CD4-positive, alpha-beta memory T cell (primary cell): ENCODE measurements at regions of chr20 and their contacts with region 1.

Region 1: DNA sequence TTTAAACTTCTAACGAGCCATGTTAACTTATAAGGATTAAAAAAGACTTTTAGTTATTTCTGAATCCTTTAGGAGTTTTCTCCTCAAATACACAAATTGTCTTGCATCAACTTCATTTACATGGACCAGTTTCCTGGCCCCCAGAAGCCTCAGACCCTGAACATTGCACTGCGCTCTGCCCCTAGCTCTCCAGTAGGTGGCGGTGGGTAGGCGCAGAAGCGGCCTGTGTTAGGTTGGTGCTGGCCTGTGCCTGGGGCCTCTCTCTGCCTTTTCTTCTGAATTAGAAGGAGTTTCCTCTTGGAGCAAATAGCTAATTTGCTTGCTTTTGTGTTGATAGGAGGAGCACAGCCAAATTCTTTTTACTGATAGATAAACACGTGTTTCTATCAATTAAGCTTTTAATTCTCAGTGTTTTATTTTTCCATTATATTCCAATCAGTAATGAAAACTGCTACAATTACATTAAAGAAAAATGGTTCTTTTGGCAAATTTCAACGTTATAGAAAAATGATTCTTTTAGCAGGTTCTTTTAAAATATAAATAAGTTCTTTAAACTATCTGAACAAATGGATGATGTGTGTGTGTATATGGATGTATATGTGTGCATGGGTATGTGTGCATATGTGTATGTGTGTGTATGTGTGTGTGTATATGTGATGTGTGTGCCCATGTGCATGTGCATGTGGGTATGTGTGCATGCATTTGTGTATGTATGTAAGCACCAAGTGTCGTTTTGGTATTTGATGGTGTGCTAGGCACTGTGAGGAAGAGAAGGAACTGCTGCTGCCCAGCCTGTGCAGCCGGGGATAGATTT is 44.5 kb downstream of the DTD1 start:
- DNase-seq: peak in 4 of 5 donors; percentile 20 to 33 (median 28)
- H3K4me3 ChIP-seq: no peak overlapping the region
- H3K4me3 Mint-ChIP-seq: no peak overlapping the region
- H3K27ac ChIP-seq: no peak overlapping the region
- H3K27ac Mint-ChIP-seq: peak overlapping the region in 1 of 7 donors; percentile 6
- H3K4me1 ChIP-seq: no peaks in the 10 kb centered on the region
- H3K4me1 Mint-ChIP-seq: peaks cover 0 to 5% (median 2%) of the 10 kb centered on the region in 4 donors
- H3K27me3 ChIP-seq: no peaks in the 10 kb centered on the region
- H3K27me3 Mint-ChIP-seq: no peaks in the 10 kb centered on the region

Region 2: GRCh38 chr20:18511571-18511970 is 120.8 kb before region 1 on chr20:
- CTCF ChIA-PET with region 1: no interaction called
- POLR2A ChIA-PET with region 1: no interaction called
- intact Hi-C with region 1: no loop called
- DNase-seq: no peak
- H3K4me3 ChIP-seq: no peak overlapping the region
- H3K4me3 Mint-ChIP-seq: no peak overlapping the region
- H3K27ac ChIP-seq: no peak overlapping the region
- H3K27ac Mint-ChIP-seq: peak overlapping the region in 2 of 7 donors; percentile 57 to 70
- H3K4me1 ChIP-seq: peaks cover 27% of the 10 kb centered on the region
- H3K4me1 Mint-ChIP-seq: peaks cover 32 to 58% (median 46%) of the 10 kb centered on the region in 4 donors
- H3K27me3 ChIP-seq: no peaks in the 10 kb centered on the region
- H3K27me3 Mint-ChIP-seq: no peaks in the 10 kb centered on the region

Region 3: DNA sequence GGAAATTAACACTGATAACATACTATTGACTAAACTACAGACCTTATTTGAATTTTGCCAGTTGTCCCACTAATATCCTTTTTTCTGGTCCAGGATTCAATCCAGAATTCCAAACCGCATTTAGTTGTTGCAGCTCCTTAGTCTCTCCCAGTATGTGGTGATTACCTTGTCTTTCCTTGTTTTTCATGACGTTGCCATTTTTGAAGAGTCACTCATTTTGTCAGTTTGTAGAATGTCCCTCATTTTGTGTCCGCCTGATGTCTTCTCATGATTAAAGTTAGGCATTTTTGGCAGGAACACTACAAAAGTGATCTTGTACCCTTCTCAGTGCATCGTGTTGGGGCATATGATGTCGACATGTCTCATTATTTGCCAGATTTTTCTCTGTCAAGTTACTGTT is 11.4 kb before region 1 on chr20:
- CTCF ChIA-PET with region 1: interaction called, 10 read pairs
- POLR2A ChIA-PET with region 1: no interaction called
- intact Hi-C with region 1: no loop called
- DNase-seq: no peak
- H3K4me3 ChIP-seq: no peak overlapping the region
- H3K4me3 Mint-ChIP-seq: no peak overlapping the region
- H3K27ac ChIP-seq: no peak overlapping the region
- H3K27ac Mint-ChIP-seq: no peak overlapping the region
- H3K4me1 ChIP-seq: no peaks in the 10 kb centered on the region
- H3K4me1 Mint-ChIP-seq: peaks cover 4 to 9% (median 7%) of the 10 kb centered on the region in 4 donors
- H3K27me3 ChIP-seq: no peaks in the 10 kb centered on the region
- H3K27me3 Mint-ChIP-seq: no peaks in the 10 kb centered on the region

Region 4: GRCh38 chr20:18783385-18783959 is 151.1 kb after region 1 on chr20:
- CTCF ChIA-PET with region 1: no interaction called
- POLR2A ChIA-PET with region 1: no interaction called
- intact Hi-C with region 1: no loop called
- DNase-seq: no peak
- H3K4me3 ChIP-seq: no peak overlapping the region
- H3K4me3 Mint-ChIP-seq: no peak overlapping the region
- H3K27ac ChIP-seq: no peak overlapping the region
- H3K27ac Mint-ChIP-seq: no peak overlapping the region
- H3K4me1 ChIP-seq: no peaks in the 10 kb centered on the region
- H3K4me1 Mint-ChIP-seq: no peaks in the 10 kb centered on the region
- H3K27me3 ChIP-seq: no peaks in the 10 kb centered on the region
- H3K27me3 Mint-ChIP-seq: peaks cover 19 to 21% of the 10 kb centered on the region in 2 donors